ENCODE measurements at regions of chr11 and their contacts with region 1.

Region 1: DNA sequence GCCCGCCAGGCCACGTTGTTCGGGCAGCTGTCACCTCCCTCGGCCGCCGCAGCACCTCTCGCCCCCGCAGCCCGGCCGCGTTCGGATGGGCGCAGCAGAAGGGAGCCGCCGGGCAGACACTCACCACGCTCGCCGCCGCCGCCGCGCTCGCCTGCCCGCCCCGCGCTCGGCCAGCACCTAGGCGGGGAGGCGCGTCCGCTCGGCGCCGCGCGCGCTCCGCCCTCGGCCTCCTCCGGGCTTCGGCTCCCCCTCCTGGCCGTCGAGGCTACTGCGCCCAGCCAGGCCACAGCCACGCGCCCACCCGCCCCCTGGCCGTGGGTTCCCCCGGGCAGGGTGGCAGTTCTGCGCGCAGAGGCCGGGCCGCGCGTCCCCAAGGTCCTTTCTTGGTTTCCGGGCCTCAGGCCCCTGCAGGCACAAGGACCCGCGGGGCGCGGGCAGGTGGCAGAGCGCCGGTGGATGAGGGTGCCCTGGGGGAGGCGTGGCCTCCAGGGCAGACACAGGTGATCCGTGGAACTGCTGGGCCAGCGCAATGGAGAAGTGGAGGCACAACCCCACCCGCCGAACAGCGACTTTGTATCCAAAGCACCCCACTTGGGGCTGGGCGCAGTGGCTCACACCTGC is at the start of gene SLC25A22:
- DNase-seq: peak; percentile 74 to 90 (median 80)
- ATAC-seq: peak; percentile 21 to 77 (median 56)
- H3K4me3 ChIP-seq: peak within 1 kb of the TSS; percentile 50 to 89 (median 78)
- H3K27ac ChIP-seq: peak within 1 kb of the TSS; percentile 37 to 88 (median 84)
- H3K4me1 ChIP-seq: peaks cover 6 to 40% (median 24%) of the 10 kb centered on the region in 12 donors
- H3K27me3 ChIP-seq: no peaks in the 10 kb centered on the region
- CTCF ChIP-seq: peak; percentile 61 to 96 (median 81)
- POLR2A ChIP-seq: peak in 1 of 2 donors; percentile 15
- total RNA-seq, gene SLC25A22: 2.1 to 12.8 (median 4.4) TPM

Region 2: DNA sequence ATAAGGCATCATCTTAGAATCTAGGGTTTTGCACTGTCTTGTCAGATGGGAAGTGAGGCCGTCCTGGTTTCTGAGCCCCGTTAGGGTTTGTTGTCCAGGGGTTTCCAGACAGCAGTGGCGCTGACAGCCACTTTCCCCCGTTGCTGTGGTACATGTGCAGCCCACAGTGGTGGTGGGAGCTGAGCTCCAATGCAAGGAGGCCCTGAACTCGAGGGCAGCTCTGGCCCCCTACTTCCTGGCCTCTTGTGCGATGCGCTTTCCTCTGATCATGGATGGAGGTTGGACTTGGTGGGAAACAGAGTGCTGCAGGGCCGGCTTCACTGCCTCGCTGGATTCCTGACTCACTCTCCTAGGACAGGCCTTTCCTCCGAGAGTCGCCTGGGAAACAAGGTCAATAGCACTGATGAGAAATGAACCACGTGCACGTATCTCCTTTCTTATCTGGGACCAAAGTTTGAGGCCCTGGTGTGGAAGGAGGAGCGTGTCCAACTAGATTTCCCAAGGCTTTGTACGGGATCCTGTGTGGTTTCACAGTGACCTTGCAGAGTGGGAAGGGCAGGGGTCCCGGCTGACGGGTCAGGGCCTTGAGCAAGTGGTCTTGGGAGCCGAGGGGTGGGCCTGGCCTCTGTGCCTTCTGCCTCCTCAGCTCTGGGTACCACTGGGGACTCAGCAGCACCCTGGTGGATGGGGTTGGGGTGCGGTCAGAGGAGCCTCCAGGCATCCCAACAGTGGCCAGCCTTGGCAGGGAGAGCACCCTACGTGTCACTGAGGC is 218.2 kb before region 1 on chr11:
- intact Hi-C with region 1: no loop called
- DNase-seq: peak in 1 of 5 donors; percentile 51
- ATAC-seq: no peak
- H3K4me3 ChIP-seq: no peak overlapping the region
- H3K27ac ChIP-seq: peak overlapping the region in 3 of 12 donors; percentile 0 to 35 (median 8)
- H3K4me1 ChIP-seq: peaks cover 18 to 58% (median 42%) of the 10 kb centered on the region in 12 donors
- H3K27me3 ChIP-seq: no peaks in the 10 kb centered on the region
- CTCF ChIP-seq: no peak
- POLR2A ChIP-seq: no peak

Region 3: DNA sequence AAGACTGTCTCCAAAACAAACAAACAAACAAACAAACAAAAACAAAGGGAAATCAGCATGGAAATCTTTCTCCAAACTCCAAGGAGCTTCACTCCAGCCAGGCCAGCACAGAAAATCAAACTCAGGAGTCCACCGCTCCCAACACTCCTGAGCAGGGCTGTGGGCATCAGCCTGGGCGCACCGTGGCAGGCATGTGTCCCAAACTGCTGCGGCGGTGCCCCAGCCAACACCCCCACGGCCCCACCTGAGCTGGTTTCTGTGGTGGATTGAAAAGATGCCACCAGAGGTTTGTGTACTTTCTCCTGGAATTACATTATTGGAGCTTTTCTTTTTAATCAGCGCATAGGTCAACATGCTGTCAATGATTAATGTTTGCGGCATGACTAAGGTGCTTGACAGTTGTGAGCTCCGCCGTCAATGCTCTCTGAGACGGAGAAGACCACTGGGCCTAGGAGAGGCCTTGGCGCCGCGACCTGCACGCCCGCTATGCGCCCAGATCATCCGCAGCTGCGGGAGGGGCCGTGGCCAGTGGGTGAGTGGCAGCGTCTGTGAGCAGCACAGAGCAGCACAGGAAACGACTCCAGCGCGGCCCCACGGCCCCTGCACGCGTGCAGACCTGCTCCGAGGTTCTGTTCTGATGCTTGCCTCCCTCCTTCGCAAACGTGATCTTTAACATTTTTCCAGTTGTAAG is 143.0 kb before region 1 on chr11:
- intact Hi-C with region 1: no loop called
- DNase-seq: no peak
- ATAC-seq: peak in 1 of 4 donors; percentile 29
- H3K4me3 ChIP-seq: no peak overlapping the region
- H3K27ac ChIP-seq: no peak overlapping the region
- H3K4me1 ChIP-seq: no peaks in the 10 kb centered on the region
- H3K27me3 ChIP-seq: no peaks in the 10 kb centered on the region
- CTCF ChIP-seq: no peak
- POLR2A ChIP-seq: no peak

Region 4: GRCh38 chr11:777288-778255 is 20.6 kb before region 1 on chr11 and contains the start of gene GATD1:
- intact Hi-C with region 1: loop called in 1 of 10 experiments (anchors 1 kb)
- DNase-seq: peak; percentile 92 to 97 (median 94)
- ATAC-seq: peak; percentile 80 to 95 (median 92)
- H3K4me3 ChIP-seq: peak within 1 kb of the TSS; percentile 53 to 100 (median 92)
- H3K27ac ChIP-seq: peak within 1 kb of the TSS; percentile 22 to 94 (median 84)
- H3K4me1 ChIP-seq: peaks cover 0 to 44% (median 27%) of the 10 kb centered on the region in 12 donors
- H3K27me3 ChIP-seq: no peaks in the 10 kb centered on the region
- CTCF ChIP-seq: peak in 1 of 12 donors; percentile 8
- POLR2A ChIP-seq: peak in 1 of 2 donors; percentile 92
- total RNA-seq, gene GATD1: 13.4 to 30.8 (median 21.5) TPM

Region 5: DNA sequence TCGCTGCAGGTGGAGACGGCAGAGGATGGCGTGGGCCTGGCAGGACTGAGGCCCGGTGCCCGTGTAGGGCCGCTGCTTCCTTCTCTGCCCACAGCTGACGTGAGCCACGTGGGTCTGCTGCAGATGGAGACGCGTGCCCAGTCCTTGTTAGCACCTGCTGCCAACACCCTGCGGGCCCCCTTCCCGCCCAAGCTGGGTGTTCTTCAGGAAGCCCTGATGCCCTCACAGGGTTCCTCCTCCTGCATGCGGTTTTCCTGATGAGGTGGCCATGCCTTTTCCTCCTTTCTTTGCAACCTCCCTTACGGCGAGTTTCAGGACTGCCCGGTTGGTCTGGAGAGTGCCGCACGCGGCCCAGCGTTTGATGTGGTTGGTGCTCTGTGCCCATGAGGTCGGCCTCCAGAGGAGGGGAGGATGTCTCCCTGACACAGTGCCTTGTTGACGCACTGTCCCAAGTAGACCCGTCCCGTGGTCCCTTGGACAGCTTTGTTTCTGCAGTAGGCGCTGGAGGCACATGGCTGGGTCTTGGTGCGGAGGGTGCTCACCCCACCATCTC is 172.2 kb after region 1 on chr11:
- intact Hi-C with region 1: no loop called
- DNase-seq: peak in 1 of 5 donors; percentile 15
- ATAC-seq: no peak
- H3K4me3 ChIP-seq: no peak overlapping the region
- H3K27ac ChIP-seq: no peak overlapping the region
- H3K4me1 ChIP-seq: peaks cover 0 to 22% (median 6%) of the 10 kb centered on the region in 12 donors
- H3K27me3 ChIP-seq: no peaks in the 10 kb centered on the region
- CTCF ChIP-seq: no peak
- POLR2A ChIP-seq: no peak

Measured in heart left ventricle (tissue), 16 donors.